ENCODE measurements at regions of chr19 and their contacts with region 1.

Region 1: GRCh38 chr19:17859533-17860330 is at the start of gene RPL18A:
- DNase-seq: peak; percentile 99
- ATAC-seq: peak; percentile 95
- H3K4me3 ChIP-seq: peak within 1 kb of the TSS; percentile 87
- H3K27ac ChIP-seq: peak within 1 kb of the TSS; percentile 43
- H3K4me1 ChIP-seq: peaks cover 16% of the 10 kb centered on the region
- H3K27me3 ChIP-seq: no peaks in the 10 kb centered on the region
- CTCF ChIP-seq: peak; percentile 85
- total RNA-seq, gene RPL18A: 1,763 and 2,241 TPM in 2 replicates

Region 2: GRCh38 chr19:17309198-17309961 is 550.4 kb before region 1 on chr19 and contains the start of gene DDA1:
- CTCF ChIA-PET with region 1: no interaction called
- POLR2A ChIA-PET with region 1: no interaction called
- intact Hi-C with region 1: no loop called
- DNase-seq: peak; percentile 100
- ATAC-seq: peak; percentile 75
- H3K4me3 ChIP-seq: peak within 1 kb of the TSS; percentile 94
- H3K27ac ChIP-seq: peak within 1 kb of the TSS; percentile 60
- H3K4me1 ChIP-seq: peaks cover 35% of the 10 kb centered on the region
- H3K27me3 ChIP-seq: no peaks in the 10 kb centered on the region
- CTCF ChIP-seq: no peak
- total RNA-seq, gene DDA1: 85.0 and 87.9 TPM in 2 replicates

Region 3: DNA sequence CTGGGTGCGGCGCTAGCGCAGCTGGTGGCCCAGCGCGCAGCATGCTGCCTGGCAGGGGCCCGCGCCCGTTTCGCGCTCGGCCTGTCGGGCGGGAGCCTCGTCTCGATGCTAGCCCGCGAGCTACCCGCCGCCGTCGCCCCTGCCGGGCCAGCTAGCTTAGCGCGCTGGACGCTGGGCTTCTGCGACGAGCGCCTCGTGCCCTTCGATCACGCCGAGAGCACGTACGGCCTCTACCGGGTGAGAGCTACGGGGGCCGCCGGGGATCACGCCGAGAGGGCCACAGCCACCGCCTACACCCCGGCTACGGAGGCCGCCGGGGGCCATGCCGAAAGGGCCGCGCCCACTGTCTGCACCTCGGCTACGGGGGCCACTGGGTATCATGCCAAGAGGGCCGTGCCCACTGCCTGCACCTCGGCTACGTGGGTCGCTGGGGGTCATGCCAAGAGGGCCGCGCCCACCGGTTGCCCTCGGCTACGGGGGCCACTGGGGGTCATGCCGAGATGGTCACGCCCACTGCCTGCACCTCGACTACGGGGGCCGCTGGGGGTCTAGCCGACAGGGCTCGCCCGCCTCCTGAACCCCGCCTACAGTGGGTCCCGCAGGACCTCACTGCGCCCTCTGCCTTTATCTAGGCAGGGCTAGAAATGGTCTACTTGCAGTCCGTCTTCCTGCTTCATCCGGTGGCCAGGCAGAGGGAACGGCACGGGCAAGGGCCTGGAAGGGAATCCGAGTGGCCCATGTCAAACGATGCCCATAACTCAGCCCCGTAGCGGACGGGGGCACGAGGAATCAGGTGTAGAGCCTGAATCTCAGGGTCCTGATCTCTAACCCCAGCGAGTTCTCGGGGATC is 347.8 kb before region 1 on chr19:
- CTCF ChIA-PET with region 1: no interaction called
- POLR2A ChIA-PET with region 1: interaction called, 17 read pairs
- intact Hi-C with region 1: no loop called
- DNase-seq: peak; percentile 60
- ATAC-seq: peak; percentile 33
- H3K4me3 ChIP-seq: peak overlapping the region; percentile 91
- H3K27ac ChIP-seq: peak overlapping the region; percentile 79
- H3K4me1 ChIP-seq: peaks cover 22% of the 10 kb centered on the region
- H3K27me3 ChIP-seq: no peaks in the 10 kb centered on the region
- CTCF ChIP-seq: peak; percentile 27; the same call in 1 of the 2 replicates

Region 4: GRCh38 chr19:17755977-17756670 is 103.6 kb before region 1 on chr19:
- CTCF ChIA-PET with region 1: interaction called, 14 read pairs
- POLR2A ChIA-PET with region 1: interaction called, 3 read pairs
- intact Hi-C with region 1: no loop called
- DNase-seq: peak; percentile 22
- ATAC-seq: no peak
- H3K4me3 ChIP-seq: no peak overlapping the region
- H3K27ac ChIP-seq: no peak overlapping the region
- H3K4me1 ChIP-seq: peaks cover 3% of the 10 kb centered on the region; the same call in 1 of the 2 replicates
- H3K27me3 ChIP-seq: no peaks in the 10 kb centered on the region
- CTCF ChIP-seq: no peak

Region 5: GRCh38 chr19:17794731-17795536 is 64.8 kb before region 1 on chr19 and contains the start of gene B3GNT3:
- CTCF ChIA-PET with region 1: interaction called, 4 read pairs
- POLR2A ChIA-PET with region 1: no interaction called
- intact Hi-C with region 1: loop called (anchors 5 kb)
- DNase-seq: peak; percentile 94
- ATAC-seq: peak; percentile 15
- H3K4me3 ChIP-seq: peak within 1 kb of the TSS; percentile 84
- H3K27ac ChIP-seq: peak within 1 kb of the TSS; percentile 99
- H3K4me1 ChIP-seq: peaks cover 58% of the 10 kb centered on the region
- H3K27me3 ChIP-seq: no peaks in the 10 kb centered on the region
- CTCF ChIP-seq: no peak
- total RNA-seq, gene B3GNT3: 39.5 and 41.7 TPM in 2 replicates

Region 6: GRCh38 chr19:17841810-17842662 is 17.7 kb before region 1 on chr19:
- CTCF ChIA-PET with region 1: interaction called, 11 read pairs
- POLR2A ChIA-PET with region 1: interaction called, 5 read pairs
- intact Hi-C with region 1: no loop called
- DNase-seq: peak; percentile 97
- ATAC-seq: peak; percentile 85
- H3K4me3 ChIP-seq: peak overlapping the region; percentile 76
- H3K27ac ChIP-seq: peak overlapping the region; percentile 51
- H3K4me1 ChIP-seq: peaks cover 19% of the 10 kb centered on the region
- H3K27me3 ChIP-seq: no peaks in the 10 kb centered on the region
- CTCF ChIP-seq: no peak

Region 7: DNA sequence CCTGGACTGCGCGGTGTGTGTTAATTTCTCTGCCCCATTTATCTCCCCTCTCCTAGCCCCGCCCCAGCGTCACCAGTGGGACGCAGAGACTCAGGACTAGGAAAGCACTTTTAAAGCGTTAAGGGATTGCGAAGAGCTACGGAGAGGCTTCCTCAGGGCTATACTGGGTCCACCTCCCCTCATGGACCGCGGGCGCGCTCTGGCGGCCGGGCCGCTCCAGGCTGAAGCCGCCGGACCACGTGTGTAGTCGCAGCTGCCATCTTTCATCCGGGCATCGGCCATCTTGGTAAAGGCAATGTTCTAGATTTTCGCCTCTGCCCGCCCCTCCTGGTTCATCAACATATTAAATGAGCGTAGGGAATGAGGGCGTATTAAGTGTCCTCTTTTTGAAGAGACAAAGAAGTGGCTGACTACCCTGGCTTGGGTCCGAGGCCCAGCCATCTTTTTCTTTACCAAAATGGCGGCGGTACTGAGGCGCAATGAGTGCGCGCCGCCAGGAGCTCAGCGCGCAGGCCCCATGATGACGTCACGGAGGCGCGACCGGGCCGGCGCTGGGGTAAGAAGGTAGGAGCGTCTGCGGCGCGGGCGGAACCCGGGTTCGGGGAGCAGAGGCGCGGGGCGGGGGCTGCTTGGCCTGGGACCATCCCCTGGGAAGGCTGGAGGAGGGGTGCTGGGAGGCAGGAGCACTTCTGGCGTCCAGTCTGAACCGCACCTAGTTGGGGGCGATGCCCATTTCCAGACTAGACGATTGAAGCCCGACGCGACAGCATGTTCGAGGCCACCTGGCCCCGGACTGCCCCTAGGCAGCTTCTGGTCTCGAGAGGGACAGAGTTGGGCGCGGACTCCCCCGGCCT is 73.0 kb after region 1 on chr19 and contains the start of gene CCDC124:
- CTCF ChIA-PET with region 1: interaction called, 33 read pairs
- POLR2A ChIA-PET with region 1: interaction called, 10 read pairs
- intact Hi-C with region 1: loop called (anchors 2 kb)
- DNase-seq: peak; percentile 95
- ATAC-seq: peak; percentile 84
- H3K4me3 ChIP-seq: peak within 1 kb of the TSS; percentile 86
- H3K27ac ChIP-seq: peak within 1 kb of the TSS; percentile 83
- H3K4me1 ChIP-seq: peaks cover 9% of the 10 kb centered on the region
- H3K27me3 ChIP-seq: no peaks in the 10 kb centered on the region
- CTCF ChIP-seq: peak; percentile 95
- total RNA-seq, gene CCDC124: 165 and 247 TPM in 2 replicates

Region 8: GRCh38 chr19:17996826-17997316 is 137.1 kb after region 1 on chr19:
- CTCF ChIA-PET with region 1: interaction called, 31 read pairs
- POLR2A ChIA-PET with region 1: interaction called, 3 read pairs
- intact Hi-C with region 1: no loop called
- DNase-seq: peak; percentile 90
- ATAC-seq: peak; percentile 60
- H3K4me3 ChIP-seq: peak overlapping the region; percentile 48; the same call in 1 of the 2 replicates
- H3K27ac ChIP-seq: no peak overlapping the region
- H3K4me1 ChIP-seq: peaks cover 15% of the 10 kb centered on the region
- H3K27me3 ChIP-seq: no peaks in the 10 kb centered on the region
- CTCF ChIP-seq: peak; percentile 93

Measured in PC-3 (cell line).